PC-9 (cell line): ENCODE measurements at regions of chr17 and their contacts with region 1.

Region 1: GRCh38 chr17:72715906-72716572 is 376.4 kb downstream of the SLC39A11 start:
- DNase-seq: peak; percentile 82 to 98
- H3K4me3 ChIP-seq: peak overlapping the region; percentile 47; the same call in 1 of the 2 replicates
- H3K27ac ChIP-seq: peak overlapping the region; percentile 97
- H3K4me1 ChIP-seq: peaks cover 55% of the 10 kb centered on the region
- H3K27me3 ChIP-seq: no peaks in the 10 kb centered on the region
- CTCF ChIP-seq: no peak

Region 2: DNA sequence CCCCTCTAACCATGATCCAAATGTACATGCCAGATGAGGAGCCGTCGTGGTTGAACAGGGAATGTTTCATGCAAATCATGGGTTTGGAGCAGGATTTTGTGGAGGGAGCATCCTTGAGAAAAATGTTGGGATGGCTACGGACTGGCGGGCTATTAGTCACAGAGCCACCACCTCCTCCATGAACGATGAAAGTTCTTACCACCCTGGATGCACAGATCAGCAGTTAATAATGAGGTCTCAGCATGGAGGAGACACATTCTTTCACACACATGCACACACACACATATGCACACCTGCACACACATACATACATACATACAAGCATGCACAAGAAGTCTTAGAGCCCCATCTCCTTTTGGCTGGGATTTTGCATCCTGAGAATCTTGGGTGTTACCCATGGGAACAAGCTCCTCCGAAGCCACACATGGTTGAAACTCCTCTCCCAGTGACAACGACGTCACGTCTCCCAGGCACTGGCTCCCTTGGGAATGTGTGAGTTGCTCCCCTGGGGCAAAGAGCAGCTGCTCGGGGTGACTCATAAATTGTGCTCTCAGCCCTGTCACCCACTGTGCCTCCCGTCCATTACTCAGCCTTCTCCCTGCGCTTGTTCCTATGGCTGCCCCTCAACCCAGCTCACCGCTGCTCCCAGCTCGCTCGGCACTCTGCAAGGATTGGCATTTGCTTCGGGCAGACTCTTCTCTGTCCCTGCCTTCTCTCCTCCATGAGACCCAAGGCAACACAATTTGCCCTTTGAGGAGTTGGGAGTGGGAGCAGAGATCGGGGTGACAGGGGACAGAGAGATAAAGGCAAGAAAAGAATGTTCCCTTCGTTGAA is 250.6 kb before region 1 on chr17:
- CTCF ChIA-PET with region 1: no interaction called
- POLR2A ChIA-PET with region 1: no interaction called
- intact Hi-C with region 1: loop called (anchors 2 kb)
- DNase-seq: peak; percentile 92 to 97
- H3K4me3 ChIP-seq: peak overlapping the region; percentile 53
- H3K27ac ChIP-seq: peak overlapping the region; percentile 100
- H3K4me1 ChIP-seq: peaks cover 79% of the 10 kb centered on the region
- H3K27me3 ChIP-seq: no peaks in the 10 kb centered on the region
- CTCF ChIP-seq: no peak

Region 3: DNA sequence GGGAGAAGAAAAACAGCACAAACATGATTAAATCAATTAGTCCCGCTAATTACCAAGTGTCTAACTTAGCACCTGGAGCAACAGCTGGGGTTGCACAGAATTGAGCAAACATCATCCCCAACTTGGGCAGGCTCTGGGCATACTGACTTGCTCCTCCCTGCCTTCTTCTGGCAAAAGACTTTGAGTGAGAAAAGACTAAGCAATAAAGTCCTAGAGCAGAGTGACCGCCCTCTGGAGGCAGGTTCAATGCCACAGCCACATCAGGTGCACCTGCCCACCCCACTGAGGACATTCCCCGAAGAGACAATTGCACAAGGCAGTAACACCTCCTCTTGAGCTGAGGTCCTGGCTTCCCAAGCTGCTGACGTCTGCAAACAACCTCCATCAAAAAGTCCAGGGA is 236.9 kb before region 1 on chr17:
- CTCF ChIA-PET with region 1: no interaction called
- POLR2A ChIA-PET with region 1: no interaction called
- intact Hi-C with region 1: no loop called
- DNase-seq: no peak
- H3K4me3 ChIP-seq: no peak overlapping the region
- H3K27ac ChIP-seq: no peak overlapping the region
- H3K4me1 ChIP-seq: peaks cover 44% of the 10 kb centered on the region
- H3K27me3 ChIP-seq: no peaks in the 10 kb centered on the region
- CTCF ChIP-seq: peak; percentile 52; the same call in 1 of the 2 replicates

Region 4: GRCh38 chr17:72587156-72587555 is 128.9 kb before region 1 on chr17:
- CTCF ChIA-PET with region 1: no interaction called
- POLR2A ChIA-PET with region 1: interaction called, 14 read pairs
- intact Hi-C with region 1: loop called (anchors 2 kb)
- DNase-seq: peak in 1 of 2 experiments; percentile 81
- H3K4me3 ChIP-seq: peak overlapping the region; percentile 97; the same call in 1 of the 2 replicates
- H3K27ac ChIP-seq: peak overlapping the region; percentile 86
- H3K4me1 ChIP-seq: peaks cover 31% of the 10 kb centered on the region
- H3K27me3 ChIP-seq: no peaks in the 10 kb centered on the region
- CTCF ChIP-seq: no peak

Region 5: DNA sequence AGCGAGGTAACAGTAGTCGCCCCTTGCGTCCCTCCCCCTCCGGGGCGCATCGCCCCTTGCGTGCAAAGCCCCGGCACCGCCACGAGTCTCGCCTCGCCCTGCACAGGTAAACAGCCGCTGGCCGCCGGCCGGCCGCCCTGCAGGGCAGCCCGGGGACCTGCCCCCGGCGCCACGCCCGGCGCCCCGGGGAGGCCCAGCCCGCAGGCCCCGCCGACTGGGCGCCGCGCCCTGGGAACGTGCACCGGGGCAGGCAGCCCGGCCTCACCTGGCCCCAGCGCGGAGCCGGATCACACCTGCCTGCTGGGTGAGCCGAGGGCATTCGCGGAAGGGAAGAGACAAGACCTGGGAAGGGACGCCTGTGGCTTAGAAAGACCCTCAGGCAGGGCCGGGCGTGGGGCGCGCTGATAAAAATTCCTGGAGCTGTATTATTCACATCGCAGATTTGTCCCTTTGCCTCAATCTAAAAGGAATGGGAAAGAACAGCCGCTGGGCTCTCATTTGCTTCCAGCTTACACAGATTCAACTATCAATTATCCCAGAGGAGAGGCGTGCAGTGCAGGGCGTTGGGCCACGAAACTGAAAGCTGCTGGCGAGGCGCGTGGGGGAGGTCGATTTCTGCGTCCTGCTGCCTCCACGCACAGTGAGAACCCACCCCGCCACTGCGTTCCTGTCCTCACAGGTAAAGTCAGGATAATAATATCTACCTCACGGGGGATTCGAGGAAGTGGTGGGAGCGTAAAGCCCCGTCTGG is 75.4 kb before region 1 on chr17:
- CTCF ChIA-PET with region 1: no interaction called
- POLR2A ChIA-PET with region 1: no interaction called
- intact Hi-C with region 1: loop called (anchors 2 kb)
- DNase-seq: peak; percentile 69 to 84
- H3K4me3 ChIP-seq: peak overlapping the region; percentile 45
- H3K27ac ChIP-seq: peak overlapping the region; percentile 46
- H3K4me1 ChIP-seq: peaks cover 24% of the 10 kb centered on the region
- H3K27me3 ChIP-seq: no peaks in the 10 kb centered on the region
- CTCF ChIP-seq: no peak

Region 6: GRCh38 chr17:73192894-73193701 is 477.1 kb after region 1 on chr17 and contains the start of gene COG1:
- CTCF ChIA-PET with region 1: no interaction called
- POLR2A ChIA-PET with region 1: interaction called, 11 read pairs
- intact Hi-C with region 1: no loop called
- DNase-seq: peak; percentile 55 to 67
- H3K4me3 ChIP-seq: peak within 1 kb of the TSS; percentile 97
- H3K27ac ChIP-seq: peak within 1 kb of the TSS; percentile 77
- H3K4me1 ChIP-seq: 0 out of 2 replicates have a peak, but pooled peaks cover 4% of the 10 kb centered on the region
- H3K27me3 ChIP-seq: no peaks in the 10 kb centered on the region
- CTCF ChIP-seq: no peak
- total RNA-seq, gene COG1: 24.8 and 25.6 TPM in 2 replicates